ENCODE measurements at regions of chr17 and their contacts with region 1.

Region 1: GRCh38 chr17:36629252-36629847 is 28.0 kb downstream of the MRM1 start:
- DNase-seq: peak; percentile 64 to 96 (median 84)

Region 2: DNA sequence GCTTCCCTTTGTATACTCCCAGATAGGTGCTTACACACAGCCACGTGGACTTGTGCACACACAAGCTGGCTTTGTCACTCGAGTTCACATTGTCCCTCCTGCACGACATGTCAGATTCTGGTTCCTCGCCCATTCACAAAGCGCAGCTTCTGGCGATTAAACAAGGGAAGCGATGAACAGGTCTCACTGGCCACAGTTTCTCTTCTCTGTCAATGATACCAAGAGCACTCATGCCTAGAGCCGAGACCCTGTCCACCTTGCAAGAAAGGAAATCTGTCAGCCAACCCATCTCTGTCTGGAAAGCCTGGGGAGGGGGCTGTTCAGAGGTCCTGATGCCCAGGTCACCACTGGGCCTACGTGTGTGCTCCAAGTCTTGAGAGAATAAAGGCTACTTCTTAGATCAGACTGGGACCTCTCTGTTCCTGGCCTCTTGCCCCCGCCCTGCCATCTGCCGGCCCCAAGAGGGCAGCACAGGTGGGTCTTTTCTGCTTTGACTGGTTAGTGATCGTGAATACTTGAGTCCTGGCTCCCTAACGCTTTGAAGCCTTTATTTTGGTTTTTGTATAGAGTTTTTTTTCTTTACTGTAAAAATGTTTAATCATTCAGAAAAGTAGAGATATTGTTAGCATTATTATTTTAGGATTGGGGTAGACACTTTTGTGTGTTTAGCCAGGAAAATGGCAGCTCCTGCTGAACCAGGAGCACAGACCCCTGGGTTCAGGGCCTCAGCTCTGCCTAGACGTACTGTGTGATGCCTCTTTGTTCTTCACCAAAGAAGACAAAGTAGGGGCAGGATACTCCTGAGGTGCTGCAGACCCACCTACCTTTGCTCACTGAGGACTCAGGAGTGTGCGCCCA is 76.8 kb after region 1 on chr17:
- intact Hi-C with region 1: loop called (anchors 10 kb)
- DNase-seq: peak in 2 of 10 donors; percentile 12 to 84

Region 3: DNA sequence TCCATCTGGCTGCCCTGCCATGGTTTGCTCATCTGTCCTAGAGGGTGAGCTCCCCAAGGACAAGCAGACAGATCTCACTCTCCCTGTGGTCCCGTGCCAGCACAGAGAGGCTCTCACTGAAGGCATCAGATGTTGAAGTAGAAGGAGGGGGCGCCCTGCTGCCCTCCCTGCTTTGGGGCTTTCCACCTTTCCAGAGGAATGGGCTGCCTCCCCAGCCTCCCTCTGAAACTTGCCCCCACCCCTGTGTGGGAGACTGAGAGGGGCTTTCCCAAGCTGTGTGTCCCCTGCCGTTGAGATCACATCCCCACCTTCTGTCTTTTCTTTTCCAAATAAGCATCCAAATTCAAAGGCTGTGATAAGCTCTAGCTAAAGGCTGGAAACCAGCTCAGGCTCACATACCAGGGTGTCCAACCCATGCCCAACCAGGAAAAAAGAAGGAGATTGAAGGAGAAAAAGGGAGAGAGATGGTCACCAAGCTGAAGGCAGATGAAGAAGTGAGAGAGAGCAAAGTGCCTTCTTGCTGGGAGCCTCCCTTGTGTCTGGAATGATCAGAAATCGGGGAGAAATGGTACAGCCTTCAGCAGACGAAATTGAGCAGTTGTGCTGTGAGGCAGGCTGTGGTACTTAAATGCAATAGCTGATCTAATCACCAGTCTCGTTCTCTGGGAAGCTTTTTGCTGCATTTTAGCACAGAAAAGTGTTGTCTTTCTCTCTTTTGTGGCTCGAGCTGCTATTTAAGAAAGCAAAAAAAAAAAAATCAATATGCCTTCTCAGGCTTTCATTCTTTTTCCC is 162.0 kb after region 1 on chr17:
- intact Hi-C with region 1: no loop called
- DNase-seq: no peak

Region 4: DNA sequence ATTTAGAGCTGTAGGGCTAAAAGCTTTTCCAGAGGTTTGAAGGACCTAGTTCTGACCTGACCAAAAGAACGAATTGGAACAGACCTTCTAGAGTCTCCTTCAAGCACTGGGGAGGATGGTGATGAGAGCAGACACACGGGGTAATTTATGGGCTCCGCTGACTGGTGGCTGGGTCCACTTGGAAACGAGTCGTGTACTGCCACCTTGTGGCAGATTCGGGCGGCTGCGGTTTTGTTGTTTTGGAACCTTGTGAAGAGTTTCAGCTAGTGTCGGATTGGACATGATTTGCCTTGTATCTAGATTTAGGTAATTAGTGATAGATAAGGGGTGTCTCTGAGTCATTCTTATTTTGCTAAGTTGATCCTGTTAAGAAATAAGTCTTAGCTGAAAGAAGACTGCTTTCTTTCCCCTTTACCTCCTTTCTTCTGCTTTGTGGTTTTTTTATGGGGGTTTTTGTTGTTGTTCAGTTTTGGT is 418.3 kb after region 1 on chr17:
- intact Hi-C with region 1: loop called (anchors 1 kb)
- DNase-seq: peak; percentile 69 to 97 (median 89)

Region 5: GRCh38 chr17:37220607-37220953 is 591.2 kb after region 1 on chr17:
- intact Hi-C with region 1: loop called (anchors 2 kb)
- DNase-seq: peak in 8 of 10 donors; percentile 33 to 94 (median 60)